GM10248 (cell line): ENCODE measurements at regions of chr15 and their contacts with region 1.

Region 1: DNA sequence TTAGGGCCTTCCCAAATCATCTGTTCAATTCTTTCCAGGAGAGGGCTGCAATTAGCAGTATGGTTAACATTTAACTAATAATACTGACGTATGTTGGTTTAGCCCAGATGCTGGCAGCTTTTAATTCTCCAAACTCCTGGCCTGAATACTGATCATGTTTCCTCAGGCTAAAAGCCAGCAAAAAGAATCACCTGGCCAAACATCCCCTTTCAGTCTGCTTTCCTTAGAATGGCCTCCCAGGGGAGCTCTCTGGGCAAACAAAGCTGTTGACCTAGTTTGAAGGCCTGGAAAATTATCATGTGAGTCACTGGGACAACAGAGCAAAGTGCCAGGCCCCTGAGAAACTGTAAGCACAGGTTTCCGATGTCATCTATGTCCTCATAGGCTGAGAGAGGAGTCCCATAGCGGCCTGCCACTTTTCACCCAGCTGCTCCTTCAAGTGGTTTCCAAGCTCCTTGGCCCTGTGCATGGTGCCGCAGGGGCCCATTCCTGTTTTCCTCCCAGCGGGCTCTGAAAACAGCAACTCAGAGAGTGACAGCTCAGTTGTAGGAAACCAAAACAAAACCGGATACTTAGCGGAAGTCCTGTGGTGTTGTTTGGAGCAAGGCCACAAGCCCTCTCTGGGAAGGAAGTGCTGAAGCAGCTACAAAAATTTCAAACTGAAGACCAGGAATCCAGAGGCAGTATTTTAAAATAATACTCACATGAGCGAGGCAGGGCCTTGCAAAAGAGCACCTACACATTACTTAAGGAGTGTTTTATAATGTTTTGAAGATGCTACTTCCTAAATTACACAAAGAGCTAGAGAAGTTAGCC is 36.5 kb upstream of the RAB11A start:
- DNase-seq: peak; percentile 32
- CTCF ChIP-seq: no peak

Region 2: GRCh38 chr15:65682404-65682911 is 150.3 kb before region 1 on chr15:
- CTCF ChIA-PET with region 1: no interaction called
- POLR2A ChIA-PET with region 1: no interaction called
- DNase-seq: no peak
- CTCF ChIP-seq: no peak

Region 3: DNA sequence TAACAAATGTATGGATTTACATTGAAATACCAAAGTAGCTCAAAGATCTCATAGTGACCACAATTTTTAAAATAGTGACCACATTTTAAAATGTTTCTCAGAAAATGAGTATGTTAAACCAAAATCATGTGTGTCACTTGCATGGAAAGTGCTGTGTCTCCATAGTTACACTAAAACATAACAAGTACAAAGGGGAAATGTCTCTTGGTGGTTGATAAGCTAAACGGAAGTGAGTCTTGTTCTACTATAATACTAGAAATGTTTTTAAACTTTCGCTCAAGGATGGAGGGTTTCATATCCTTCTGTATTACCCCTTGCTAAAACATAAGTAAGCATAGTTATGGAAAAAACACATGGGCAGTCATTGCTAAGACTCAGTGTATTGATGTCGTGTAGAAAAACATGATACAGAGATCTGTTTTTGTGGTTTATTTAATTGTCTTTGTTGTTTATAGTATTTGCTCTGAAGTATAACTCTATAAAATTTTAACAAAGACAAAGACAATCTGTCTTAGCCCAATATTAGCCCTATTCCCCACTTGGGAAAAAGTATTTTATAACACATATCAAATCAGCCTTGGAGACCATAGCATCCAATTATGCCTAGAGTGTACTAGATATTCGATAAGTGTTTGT is 13.7 kb before region 1 on chr15:
- CTCF ChIA-PET with region 1: interaction called, 27 read pairs
- POLR2A ChIA-PET with region 1: interaction called, 7 read pairs
- DNase-seq: peak; percentile 71
- CTCF ChIP-seq: no peak

Region 4: DNA sequence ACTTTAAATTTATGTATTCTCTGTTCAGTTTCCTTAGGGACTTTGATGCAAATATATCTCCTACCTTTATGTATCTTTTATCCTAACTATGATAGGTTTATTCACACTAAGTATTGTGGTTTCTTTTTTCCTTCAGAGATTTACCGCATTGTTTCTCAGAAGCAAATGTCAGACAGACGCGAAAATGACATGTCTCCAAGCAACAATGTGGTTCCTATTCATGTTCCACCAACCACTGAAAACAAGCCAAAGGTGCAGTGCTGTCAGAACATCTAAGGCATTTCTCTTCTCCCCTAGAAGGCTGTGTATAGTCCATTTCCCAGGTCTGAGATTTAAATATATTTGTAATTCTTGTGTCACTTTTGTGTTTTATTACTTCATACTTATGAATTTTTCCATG is 54.8 kb after region 1 on chr15:
- CTCF ChIA-PET with region 1: no interaction called
- POLR2A ChIA-PET with region 1: no interaction called
- DNase-seq: no peak
- CTCF ChIP-seq: no peak